ENCODE measurements at regions of chr3 and their contacts with region 1.

Region 1: DNA sequence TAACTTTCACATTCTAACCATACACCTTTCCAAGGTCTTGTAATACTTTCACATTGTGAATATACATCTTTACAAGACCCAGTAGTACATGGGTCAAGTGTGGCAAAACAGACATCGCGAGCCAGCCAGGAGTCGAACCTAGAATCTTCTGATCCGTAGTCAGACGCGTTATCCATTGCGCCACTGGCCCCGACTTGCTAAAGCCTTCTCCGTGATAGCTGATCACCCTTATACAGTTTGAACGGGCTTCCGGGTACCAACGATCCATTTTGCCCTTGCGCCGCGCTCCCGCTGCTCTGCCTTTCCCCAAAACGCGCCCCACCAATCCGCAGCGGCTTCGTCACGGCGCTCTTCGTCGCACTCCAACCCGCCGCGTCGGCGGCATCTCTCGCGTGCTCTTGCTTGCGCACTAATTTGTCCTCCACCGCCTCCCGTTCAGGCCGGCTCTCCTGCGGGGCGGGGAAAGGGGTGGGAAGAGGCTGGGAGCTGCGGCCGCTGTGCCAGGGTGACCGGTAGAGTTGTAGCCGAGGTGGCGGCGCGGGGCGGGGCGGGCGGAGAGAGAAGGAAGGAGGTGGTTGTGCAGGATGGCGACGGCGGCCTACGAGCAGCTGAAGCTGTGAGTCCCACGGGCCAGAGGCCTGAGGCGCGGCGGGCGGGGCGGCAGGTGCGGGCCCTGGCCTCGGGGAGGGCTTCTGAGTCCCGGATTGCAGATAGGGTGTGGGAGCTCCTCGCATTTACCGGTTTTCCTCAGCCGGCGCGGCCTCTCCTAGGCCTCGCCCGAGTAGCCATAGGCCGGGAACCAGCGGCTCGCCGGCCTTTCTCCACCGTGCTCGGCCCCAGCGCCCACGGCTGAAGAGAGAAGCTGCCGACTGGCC is at the start of gene SACM1L:
- DNase-seq: peak; percentile 92 to 99 (median 96)
- H3K4me3 ChIP-seq: peak within 1 kb of the TSS; percentile 64 to 100 (median 89)
- H3K27ac ChIP-seq: peak within 1 kb of the TSS; percentile 46 to 98 (median 91)
- H3K27me3 ChIP-seq: no peaks in the 10 kb centered on the region
- CTCF ChIP-seq: peak in 26 of 56 donors; percentile 4 to 50 (median 26)
- total RNA-seq, gene SACM1L: 44.0 to 100 (median 73.4) TPM

Region 2: GRCh38 chr3:45841757-45842491 is 152.8 kb after region 1 on chr3 and contains the start of gene LZTFL1:
- intact Hi-C with region 1: loop called in 1 of 2 experiments (anchors 10 kb)
- DNase-seq: peak; percentile 78 to 94 (median 92)
- H3K4me3 ChIP-seq: peak within 1 kb of the TSS; percentile 60 to 100 (median 93)
- H3K27ac ChIP-seq: peak within 1 kb of the TSS in 21 of 59 donors; percentile 9 to 73 (median 53)
- H3K27me3 ChIP-seq: no peaks in the 10 kb centered on the region
- CTCF ChIP-seq: peak in 7 of 56 donors; percentile 4 to 17 (median 11)
- total RNA-seq, gene LZTFL1: 18.7 to 71.8 (median 48.5) TPM